Uterus (tissue), 4 donors: ENCODE measurements at regions of chr16 and their contacts with region 1.

Region 1: DNA sequence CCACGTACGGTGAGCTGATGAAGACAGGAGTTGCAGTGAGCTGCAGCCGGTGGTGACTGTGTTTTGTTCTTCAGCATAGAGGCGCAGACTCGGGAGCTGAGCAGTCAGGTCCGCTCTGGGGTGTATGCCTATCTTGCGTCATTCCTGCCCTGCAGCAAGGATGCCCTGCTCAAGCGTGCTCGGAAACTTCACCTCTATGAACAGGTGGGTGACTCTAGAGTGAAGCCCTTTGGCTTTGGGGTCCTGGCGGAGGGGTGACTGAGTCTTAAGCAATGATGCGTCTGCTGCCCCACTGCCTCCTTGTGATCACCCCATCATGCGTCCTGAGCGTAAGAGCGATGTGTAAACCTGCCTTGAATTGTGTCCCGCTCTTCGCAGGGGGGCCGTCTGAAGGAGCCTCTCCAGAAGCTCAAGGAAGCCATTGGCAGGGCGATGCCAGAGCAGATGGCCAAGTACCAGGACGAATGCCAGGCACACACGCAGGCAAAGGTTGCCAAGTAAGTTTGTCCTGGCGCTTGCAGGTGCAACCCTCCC is 22.9 kb downstream of the UBN1 start:
- DNase-seq: no peak
- H3K4me3 ChIP-seq: no peak overlapping the region
- H3K27ac ChIP-seq: no peak overlapping the region
- H3K4me1 ChIP-seq: no peaks in the 10 kb centered on the region
- H3K27me3 ChIP-seq: no peaks in the 10 kb centered on the region
- CTCF ChIP-seq: no peak
- POLR2A ChIP-seq: no peak

Region 2: GRCh38 chr16:2905431-2906387 is 1964.5 kb before region 1 on chr16:
- intact Hi-C with region 1: loop called (anchors 10 kb)
- DNase-seq: peak; percentile 99 to 100
- H3K4me3 ChIP-seq: peak overlapping the region; percentile 80 to 97
- H3K27ac ChIP-seq: peak overlapping the region; percentile 85 to 91
- H3K4me1 ChIP-seq: peaks cover 0 to 6% of the 10 kb centered on the region in 2 donors
- H3K27me3 ChIP-seq: no peaks in the 10 kb centered on the region
- CTCF ChIP-seq: no peak
- POLR2A ChIP-seq: no peak

Region 3: GRCh38 chr16:4802659-4803287 is 67.4 kb before region 1 on chr16:
- intact Hi-C with region 1: no loop called
- DNase-seq: peak; percentile 91
- H3K4me3 ChIP-seq: peak overlapping the region; percentile 51 to 83
- H3K27ac ChIP-seq: peak overlapping the region; percentile 70 to 85
- H3K4me1 ChIP-seq: peaks cover 0 to 11% of the 10 kb centered on the region in 2 donors
- H3K27me3 ChIP-seq: no peaks in the 10 kb centered on the region
- CTCF ChIP-seq: peak; percentile 7 to 66 (median 24)
- POLR2A ChIP-seq: peak; percentile 12 to 41